Endothelial cell of umbilical vein (primary cell): ENCODE measurements at regions of chr9 and their contacts with region 1.

Region 1: GRCh38 chr9:111271481-111272080 is 58.4 kb downstream of the OR2K2 start:
- DNase-seq: no peak
- H3K4me3 ChIP-seq: no peak overlapping the region
- H3K27ac ChIP-seq: no peak overlapping the region
- H3K4me1 ChIP-seq: no peaks in the 10 kb centered on the region
- H3K27me3 ChIP-seq: no peaks in the 10 kb centered on the region
- CTCF ChIP-seq: no peak
- POLR2A ChIP-seq: no peak

Region 2: DNA sequence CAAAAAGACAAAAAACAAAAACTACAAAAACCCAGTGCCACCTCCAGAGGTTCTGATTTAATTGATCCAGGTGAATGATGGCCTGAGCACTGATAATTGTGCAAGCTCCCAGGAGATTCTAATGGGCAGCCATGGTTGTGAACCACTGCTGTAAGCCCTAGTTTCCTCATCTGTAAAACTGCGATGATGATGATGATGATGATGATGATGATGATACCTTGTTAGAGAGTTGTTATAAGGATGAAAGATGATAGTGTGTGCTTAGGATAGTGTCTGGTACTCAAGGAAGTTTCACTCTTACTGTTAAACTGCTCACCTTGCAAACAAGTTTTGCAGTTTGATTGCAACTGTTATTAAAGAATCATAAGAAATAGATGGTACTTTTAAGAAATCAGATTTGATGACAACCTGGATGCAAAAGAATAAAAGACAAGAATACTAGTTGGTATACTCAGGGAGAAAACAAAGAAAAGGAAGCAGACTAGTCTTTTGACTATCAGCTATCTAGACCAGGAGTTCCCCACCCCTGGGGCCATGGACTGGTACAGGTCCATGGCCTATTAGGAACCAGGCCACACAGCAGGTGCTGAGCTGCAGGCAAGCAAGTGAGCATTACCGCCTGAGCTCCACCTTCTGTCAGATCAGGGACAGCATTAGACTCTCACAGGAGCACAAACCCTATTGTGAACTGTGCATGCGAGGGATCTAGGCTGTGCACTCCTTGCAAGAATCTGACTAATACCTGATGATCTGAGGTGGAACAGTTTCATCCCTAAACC is 39.6 kb before region 1 on chr9:
- CTCF ChIA-PET with region 1: no interaction called
- POLR2A ChIA-PET with region 1: no interaction called
- dilution Hi-C with region 1: no loop called
- intact Hi-C with region 1: loop called (anchors 2 kb)
- DNase-seq: no peak
- H3K4me3 ChIP-seq: no peak overlapping the region
- H3K27ac ChIP-seq: no peak overlapping the region
- H3K4me1 ChIP-seq: no peaks in the 10 kb centered on the region
- H3K27me3 ChIP-seq: no peaks in the 10 kb centered on the region
- CTCF ChIP-seq: no peak
- POLR2A ChIP-seq: no peak

Region 3: DNA sequence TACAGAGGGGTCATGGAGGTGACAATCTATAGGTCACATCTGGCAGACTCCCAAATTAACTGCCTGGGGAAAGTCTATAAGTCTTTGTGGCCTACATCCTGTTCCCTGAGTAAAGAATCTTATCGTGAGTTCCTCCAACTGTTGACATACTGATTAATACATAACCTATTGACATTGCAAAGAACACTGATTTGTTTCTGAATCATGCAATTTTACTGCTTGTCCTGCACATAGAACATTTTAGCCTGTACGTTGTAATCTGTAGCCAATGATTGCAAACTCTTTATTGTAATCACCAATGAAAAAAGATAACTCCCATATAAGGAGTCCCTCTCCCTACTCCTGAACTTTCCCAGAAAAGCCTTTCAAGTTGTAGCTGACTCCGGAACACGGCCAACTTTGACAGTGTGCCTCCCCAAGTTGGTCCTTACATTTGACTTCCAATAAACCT is 77.3 kb after region 1 on chr9:
- CTCF ChIA-PET with region 1: no interaction called
- POLR2A ChIA-PET with region 1: no interaction called
- dilution Hi-C with region 1: no loop called
- intact Hi-C with region 1: no loop called
- DNase-seq: peak; percentile 95
- H3K4me3 ChIP-seq: no peak overlapping the region
- H3K27ac ChIP-seq: peak overlapping the region; percentile 45
- H3K4me1 ChIP-seq: peaks cover 8% of the 10 kb centered on the region
- H3K27me3 ChIP-seq: no peaks in the 10 kb centered on the region
- CTCF ChIP-seq: no peak
- POLR2A ChIP-seq: peak; percentile 60